ENCODE measurements at regions of chr1 and their contacts with region 1.

Region 1: GRCh38 chr1:148372731-148373130 is 110.4 kb downstream of the PPIAL4G start:
- DNase-seq: peak; percentile 82
- H3K4me3 Mint-ChIP-seq: peak overlapping the region; percentile 75
- H3K27ac Mint-ChIP-seq: peak overlapping the region; percentile 98
- H3K4me1 Mint-ChIP-seq: peaks cover 55% of the 10 kb centered on the region
- H3K27me3 Mint-ChIP-seq: no peaks in the 10 kb centered on the region

Region 2: GRCh38 chr1:148353461-148354283 is 19.1 kb before region 1 on chr1:
- CTCF ChIA-PET with region 1: interaction called, 4 read pairs
- intact Hi-C with region 1: loop called (anchors 1 kb)
- DNase-seq: peak; percentile 72
- H3K4me3 Mint-ChIP-seq: peak overlapping the region; percentile 63
- H3K27ac Mint-ChIP-seq: peak overlapping the region; percentile 73
- H3K4me1 Mint-ChIP-seq: peaks cover 15% of the 10 kb centered on the region
- H3K27me3 Mint-ChIP-seq: peaks cover 32% of the 10 kb centered on the region